B cell (primary cell): ENCODE measurements at regions of chr2 and their contacts with region 1.

Region 1: GRCh38 chr2:165874445-165875039 is 79.0 kb downstream of the TTC21B start:
- DNase-seq: peak; percentile 79
- ATAC-seq: peak; percentile 91
- H3K4me3 ChIP-seq: no peak overlapping the region
- H3K4me3 Mint-ChIP-seq: peak overlapping the region; percentile 7
- H3K27ac ChIP-seq: peak overlapping the region in 1 of 2 donors; percentile 28
- H3K27ac Mint-ChIP-seq: peak overlapping the region; percentile 34
- H3K4me1 ChIP-seq: peaks cover 0 to 4% of the 10 kb centered on the region in 2 donors
- H3K4me1 Mint-ChIP-seq: peaks cover 3% of the 10 kb centered on the region
- H3K27me3 ChIP-seq: no peaks in the 10 kb centered on the region
- H3K27me3 Mint-ChIP-seq: no peaks in the 10 kb centered on the region
- CTCF ChIP-seq: peak; percentile 90

Region 2: DNA sequence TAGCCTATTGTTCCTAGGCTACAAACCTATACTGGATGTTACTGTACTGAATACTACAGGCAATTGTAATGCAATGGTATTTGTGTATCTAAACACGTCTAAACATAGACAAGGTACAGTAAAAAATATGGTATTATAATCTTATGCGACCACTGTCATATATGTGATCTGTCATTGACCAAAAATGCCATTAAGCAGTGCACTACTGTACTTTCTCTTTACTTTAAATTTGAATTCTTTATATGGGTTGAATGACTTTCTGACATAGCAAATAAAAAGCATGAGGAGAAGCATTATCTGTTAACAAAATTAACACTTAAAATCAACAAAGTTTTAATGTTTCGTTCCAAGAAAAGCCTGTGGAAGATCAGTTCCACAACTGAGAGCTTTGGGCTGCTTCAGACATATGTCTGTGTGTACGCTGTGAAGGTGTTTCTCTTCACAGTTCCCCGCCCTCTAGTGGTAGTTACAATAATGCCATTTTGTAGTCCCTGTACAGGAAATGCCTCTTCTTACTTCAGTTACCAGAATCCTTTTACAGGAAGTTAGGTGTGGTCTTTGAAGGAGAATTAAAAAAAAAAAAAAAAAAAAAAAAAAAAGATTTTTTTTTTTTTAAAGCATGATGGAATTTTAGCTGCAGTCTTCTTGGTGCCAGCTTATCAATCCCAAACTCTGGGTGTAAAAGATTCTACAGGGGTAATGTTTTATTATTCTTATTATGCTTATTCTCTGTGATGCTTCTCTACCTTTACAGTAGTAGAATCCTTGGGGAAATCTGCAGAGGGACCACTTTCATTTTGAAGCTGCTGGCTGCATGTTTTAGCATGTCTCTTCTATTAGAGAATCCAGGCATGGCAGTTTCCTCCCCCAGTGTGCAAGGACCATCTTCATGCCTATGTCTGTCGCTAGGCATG is 580.8 kb before region 1 on chr2:
- CTCF ChIA-PET with region 1: interaction called, 3 read pairs
- POLR2A ChIA-PET with region 1: no interaction called
- intact Hi-C with region 1: loop called (anchors 10 kb)
- DNase-seq: peak; percentile 90
- ATAC-seq: peak; percentile 100
- H3K4me3 ChIP-seq: no peak overlapping the region
- H3K4me3 Mint-ChIP-seq: no peak overlapping the region
- H3K27ac ChIP-seq: no peak overlapping the region
- H3K27ac Mint-ChIP-seq: no peak overlapping the region
- H3K4me1 ChIP-seq: peaks cover 3 to 7% of the 10 kb centered on the region in 2 donors
- H3K4me1 Mint-ChIP-seq: peaks cover 3% of the 10 kb centered on the region
- H3K27me3 ChIP-seq: no peaks in the 10 kb centered on the region
- H3K27me3 Mint-ChIP-seq: peaks cover 9% of the 10 kb centered on the region
- CTCF ChIP-seq: peak; percentile 84

Region 3: GRCh38 chr2:165563468-165564225 is 310.9 kb before region 1 on chr2:
- CTCF ChIA-PET with region 1: interaction called, 11 read pairs
- POLR2A ChIA-PET with region 1: no interaction called
- intact Hi-C with region 1: loop called (anchors 2 kb)
- DNase-seq: peak; percentile 13
- ATAC-seq: no peak
- H3K4me3 ChIP-seq: no peak overlapping the region
- H3K4me3 Mint-ChIP-seq: no peak overlapping the region
- H3K27ac ChIP-seq: no peak overlapping the region
- H3K27ac Mint-ChIP-seq: no peak overlapping the region
- H3K4me1 ChIP-seq: no peaks in the 10 kb centered on the region
- H3K4me1 Mint-ChIP-seq: no peaks in the 10 kb centered on the region
- H3K27me3 ChIP-seq: peaks cover 0 to 4% (median 0%) of the 10 kb centered on the region in 4 experiments
- H3K27me3 Mint-ChIP-seq: peaks cover 11% of the 10 kb centered on the region
- CTCF ChIP-seq: no peak

Region 4: DNA sequence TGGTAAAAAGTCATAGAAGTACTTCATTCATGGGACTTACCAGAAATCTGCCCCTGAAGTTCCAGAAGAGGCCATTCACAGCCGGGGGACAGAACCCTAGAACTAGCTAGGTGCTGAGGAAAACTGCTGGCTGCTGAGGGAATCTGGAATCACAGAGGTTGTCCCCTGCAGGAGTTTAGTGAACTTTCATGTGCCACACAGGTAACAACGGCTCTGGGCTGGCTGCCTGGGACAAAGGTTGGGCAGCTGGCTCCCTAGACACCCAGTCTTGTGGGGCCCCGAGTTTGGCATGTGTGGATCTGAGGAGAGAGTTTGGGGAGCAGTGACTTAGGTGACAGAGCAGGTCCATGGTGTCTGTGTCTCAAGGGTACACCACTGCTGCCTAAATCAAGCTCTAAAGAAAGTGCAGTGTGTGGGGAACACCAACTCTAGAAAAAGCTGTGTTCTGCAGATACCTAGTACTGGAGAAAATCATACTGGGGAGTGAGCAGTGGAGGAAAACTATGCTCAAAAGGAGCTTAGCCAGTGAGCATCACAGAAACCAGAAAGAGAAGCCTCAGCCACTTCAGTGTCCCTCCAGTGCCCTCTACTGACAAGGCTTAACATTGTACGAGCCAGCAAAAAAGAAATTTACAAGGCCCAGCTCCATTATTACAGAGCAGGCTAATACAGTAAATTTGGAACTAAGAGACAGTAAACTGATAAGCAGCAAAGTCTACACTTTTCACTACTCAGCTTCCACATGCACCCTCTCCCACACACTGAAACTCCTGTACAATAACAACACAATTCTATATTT is 95.7 kb before region 1 on chr2:
- CTCF ChIA-PET with region 1: interaction called, 12 read pairs
- POLR2A ChIA-PET with region 1: no interaction called
- intact Hi-C with region 1: no loop called
- DNase-seq: no peak
- ATAC-seq: no peak
- H3K4me3 ChIP-seq: no peak overlapping the region
- H3K4me3 Mint-ChIP-seq: no peak overlapping the region
- H3K27ac ChIP-seq: no peak overlapping the region
- H3K27ac Mint-ChIP-seq: no peak overlapping the region
- H3K4me1 ChIP-seq: peaks cover 6 to 9% of the 10 kb centered on the region in 2 donors
- H3K4me1 Mint-ChIP-seq: peaks cover 13% of the 10 kb centered on the region
- H3K27me3 ChIP-seq: no peaks in the 10 kb centered on the region
- H3K27me3 Mint-ChIP-seq: no peaks in the 10 kb centered on the region
- CTCF ChIP-seq: no peak

Region 5: GRCh38 chr2:165815299-165816141 is 59.0 kb before region 1 on chr2:
- CTCF ChIA-PET with region 1: interaction called, 11 read pairs
- POLR2A ChIA-PET with region 1: no interaction called
- intact Hi-C with region 1: loop called (anchors 5 kb)
- DNase-seq: peak; percentile 71
- ATAC-seq: peak; percentile 78
- H3K4me3 ChIP-seq: peak overlapping the region in 1 of 5 experiments; percentile 48
- H3K4me3 Mint-ChIP-seq: peak overlapping the region; percentile 71
- H3K27ac ChIP-seq: peak overlapping the region; percentile 79 to 81
- H3K27ac Mint-ChIP-seq: peak overlapping the region; percentile 86
- H3K4me1 ChIP-seq: peaks cover 59 to 60% of the 10 kb centered on the region in 2 donors
- H3K4me1 Mint-ChIP-seq: peaks cover 54% of the 10 kb centered on the region
- H3K27me3 ChIP-seq: no peaks in the 10 kb centered on the region
- H3K27me3 Mint-ChIP-seq: no peaks in the 10 kb centered on the region
- CTCF ChIP-seq: no peak

Region 6: GRCh38 chr2:165953655-165954606 is 79.4 kb after region 1 on chr2 and contains the start of gene TTC21B:
- CTCF ChIA-PET with region 1: interaction called, 4 read pairs
- POLR2A ChIA-PET with region 1: no interaction called
- intact Hi-C with region 1: loop called (anchors 2 kb)
- DNase-seq: peak; percentile 93
- ATAC-seq: peak; percentile 96
- H3K4me3 ChIP-seq: peak within 1 kb of the TSS; percentile 62 to 82 (median 71)
- H3K4me3 Mint-ChIP-seq: peak within 1 kb of the TSS; percentile 53
- H3K27ac ChIP-seq: peak within 1 kb of the TSS; percentile 77
- H3K27ac Mint-ChIP-seq: no peak within 1 kb of the TSS
- H3K4me1 ChIP-seq: peaks cover 19 to 23% of the 10 kb centered on the region in 2 donors
- H3K4me1 Mint-ChIP-seq: peaks cover 12% of the 10 kb centered on the region
- H3K27me3 ChIP-seq: no peaks in the 10 kb centered on the region
- H3K27me3 Mint-ChIP-seq: no peaks in the 10 kb centered on the region
- CTCF ChIP-seq: peak; percentile 90
- total RNA-seq, gene TTC21B: 41.5 and 50.7 TPM in 2 replicates